ENCODE measurements at regions of chr10 and their contacts with region 1.

Region 1: DNA sequence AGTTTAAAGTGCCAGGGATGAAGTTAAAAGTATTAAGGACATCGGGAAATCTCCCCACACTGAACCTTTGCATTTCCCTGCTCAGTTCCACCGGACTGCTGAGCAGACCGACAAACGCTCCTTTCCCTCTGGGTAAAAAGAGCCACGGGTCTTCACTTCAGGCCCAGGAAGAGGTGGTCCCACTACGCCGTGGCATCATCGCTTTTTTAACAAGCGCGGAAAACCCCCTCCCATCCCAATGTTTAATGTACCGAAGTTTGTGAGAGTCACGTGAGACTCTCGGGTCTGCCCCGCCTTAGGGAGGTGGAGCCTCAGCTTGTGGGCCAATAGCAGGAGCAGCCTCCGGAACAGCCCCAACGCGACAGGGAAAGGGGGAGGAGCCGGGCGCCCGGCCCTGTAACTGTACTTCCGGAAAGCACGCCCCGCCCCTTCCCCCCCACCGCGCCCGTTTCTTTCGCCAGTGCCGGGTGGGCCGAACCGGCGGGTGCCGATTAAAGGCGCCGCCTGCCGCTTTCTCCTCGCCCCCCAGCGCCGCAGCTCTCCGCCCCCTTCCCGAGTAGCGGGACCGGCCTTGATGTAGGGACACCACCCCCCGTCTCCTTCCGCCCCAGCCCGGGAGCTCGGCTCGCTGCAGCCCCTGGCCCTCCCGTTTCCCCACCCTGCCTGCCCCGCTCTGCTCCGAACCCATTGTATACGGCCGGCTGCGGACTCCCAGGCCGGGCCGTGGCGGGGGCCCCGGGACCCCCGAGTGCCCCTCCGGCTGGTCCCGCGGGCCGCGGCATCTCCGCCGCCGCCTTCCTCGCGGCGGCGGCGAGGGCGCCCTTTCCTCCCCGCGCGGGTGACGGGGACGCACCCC is 2.2 kb upstream of the TRIM8 start:
- DNase-seq: peak; percentile 99
- H3K4me3 ChIP-seq: peak overlapping the region; percentile 79 to 81
- H3K27ac ChIP-seq: peak overlapping the region; percentile 96 to 99
- H3K4me1 ChIP-seq: peaks cover 10% of the 10 kb centered on the region
- H3K27me3 ChIP-seq: no peaks in the 10 kb centered on the region
- CTCF ChIP-seq: no peak
- POLR2A ChIP-seq: peak; percentile 74

Region 2: GRCh38 chr10:102503281-102504220 is 138.6 kb before region 1 on chr10 and contains the start of gene SUFU:
- intact Hi-C with region 1: loop called (anchors 10 kb)
- DNase-seq: peak; percentile 100
- H3K4me3 ChIP-seq: peak within 1 kb of the TSS; percentile 95 to 98
- H3K27ac ChIP-seq: peak within 1 kb of the TSS; percentile 80 to 96
- H3K4me1 ChIP-seq: peaks cover 18% of the 10 kb centered on the region
- H3K27me3 ChIP-seq: no peaks in the 10 kb centered on the region
- CTCF ChIP-seq: peak; percentile 87 to 96 (median 89)
- POLR2A ChIP-seq: peak; percentile 51
- total RNA-seq, gene SUFU: 16.5 to 22.9 TPM

Region 3: DNA sequence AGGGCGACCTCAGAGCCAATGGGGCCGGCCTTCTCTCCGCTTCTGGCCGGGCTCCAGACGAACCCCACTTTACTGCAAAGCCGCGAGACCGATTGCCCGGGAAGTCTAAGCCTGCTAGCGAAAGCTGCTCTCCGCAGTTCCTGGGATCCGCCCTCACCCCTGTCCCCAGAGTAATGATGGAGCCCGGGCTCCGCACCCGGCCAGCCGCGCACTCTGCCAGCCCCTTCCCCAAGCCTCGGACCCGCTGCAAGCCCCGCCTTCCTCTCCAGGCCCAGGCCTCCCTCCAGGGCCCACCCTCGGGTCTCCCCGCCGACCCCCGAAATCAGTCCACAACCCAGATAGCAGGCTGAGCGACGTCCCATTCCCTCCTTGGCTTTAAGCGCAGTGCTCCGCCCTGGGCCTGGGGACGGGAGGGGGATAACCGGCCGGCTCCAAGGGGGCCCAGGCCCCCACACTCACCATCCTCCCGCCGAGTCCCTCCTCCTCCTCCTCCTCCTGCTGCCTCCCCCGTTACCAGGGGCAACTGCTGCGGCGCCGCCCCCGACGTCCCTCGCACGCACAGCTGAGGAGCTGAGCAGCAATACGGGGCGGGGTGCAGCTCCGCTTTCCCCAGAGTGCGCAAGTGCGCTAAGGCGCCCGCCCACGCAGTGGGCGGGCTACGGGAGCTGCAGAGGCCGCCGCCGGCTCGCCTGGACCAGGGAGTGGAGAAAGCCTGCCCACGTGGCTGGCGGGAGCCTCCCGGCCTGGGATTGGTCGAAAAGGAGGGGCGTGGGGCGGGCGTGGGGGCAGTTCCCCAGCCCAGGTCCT is 71.9 kb after region 1 on chr10 and contains the start of gene ARL3:
- intact Hi-C with region 1: loop called (anchors 5 kb)
- DNase-seq: peak; percentile 97
- H3K4me3 ChIP-seq: peak within 1 kb of the TSS; percentile 67 to 99
- H3K27ac ChIP-seq: peak within 1 kb of the TSS; percentile 75 to 95
- H3K4me1 ChIP-seq: peaks cover 27% of the 10 kb centered on the region
- H3K27me3 ChIP-seq: no peaks in the 10 kb centered on the region
- CTCF ChIP-seq: peak in 2 of 3 experiments; percentile 26 to 38
- POLR2A ChIP-seq: no peak
- total RNA-seq, gene ARL3: 10.8 to 10.9 TPM

Measured in testis (tissue), 5 donors.